ENCODE measurements at regions of chr3 and their contacts with region 1.

Region 1: GRCh38 chr3:188154014-188154808 is at the start of gene LPP:
- DNase-seq: peak; percentile 91
- ATAC-seq: peak; percentile 84
- H3K4me3 Mint-ChIP-seq: peak within 1 kb of the TSS; percentile 92
- H3K27ac Mint-ChIP-seq: peak within 1 kb of the TSS; percentile 94
- H3K4me1 Mint-ChIP-seq: peaks cover 54% of the 10 kb centered on the region
- H3K27me3 Mint-ChIP-seq: no peaks in the 10 kb centered on the region
- total RNA-seq, gene LPP: 49.6 to 54.3 TPM

Region 2: GRCh38 chr3:187802928-187803259 is 351.3 kb before region 1 on chr3:
- POLR2A ChIA-PET with region 1: interaction called, 24 read pairs
- DNase-seq: no peak
- ATAC-seq: peak; percentile 50
- H3K4me3 Mint-ChIP-seq: peak overlapping the region; percentile 73
- H3K27ac Mint-ChIP-seq: peak overlapping the region; percentile 95
- H3K4me1 Mint-ChIP-seq: peaks cover 75% of the 10 kb centered on the region
- H3K27me3 Mint-ChIP-seq: no peaks in the 10 kb centered on the region

Region 3: DNA sequence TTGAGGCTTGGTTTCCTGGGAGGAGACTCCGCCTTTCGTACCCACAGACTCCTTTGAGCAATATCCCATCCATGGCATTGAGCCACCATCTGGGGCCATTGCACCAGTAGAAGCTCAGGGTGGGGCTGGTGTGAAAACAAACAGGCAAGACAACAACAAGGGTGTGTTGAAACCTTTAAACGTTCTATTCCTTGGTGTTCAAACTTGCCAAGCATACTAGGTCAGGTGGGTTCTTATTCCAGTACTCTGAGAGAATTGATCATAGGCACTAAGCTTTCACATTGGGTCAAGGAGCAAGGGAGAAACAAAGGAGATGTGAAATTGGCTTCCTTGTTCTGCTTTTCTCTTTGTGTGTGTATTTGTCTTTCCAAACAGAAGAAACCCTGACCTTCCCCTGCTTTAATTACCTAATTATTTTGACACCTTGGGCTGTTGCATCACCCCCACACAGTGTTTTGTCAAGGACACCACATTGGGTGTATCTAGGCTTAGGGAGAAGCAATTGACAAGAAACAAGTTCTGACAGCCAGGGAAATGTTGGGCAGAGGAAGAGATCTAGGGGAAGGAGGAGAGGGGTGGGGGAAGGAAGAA is 303.8 kb before region 1 on chr3:
- POLR2A ChIA-PET with region 1: no interaction called
- DNase-seq: no peak
- ATAC-seq: no peak
- H3K4me3 Mint-ChIP-seq: no peak overlapping the region
- H3K27ac Mint-ChIP-seq: no peak overlapping the region
- H3K4me1 Mint-ChIP-seq: peaks cover 5% of the 10 kb centered on the region
- H3K27me3 Mint-ChIP-seq: no peaks in the 10 kb centered on the region

Region 4: GRCh38 chr3:188000361-188000861 is 153.8 kb before region 1 on chr3:
- POLR2A ChIA-PET with region 1: interaction called, 27 read pairs
- DNase-seq: peak; percentile 59
- ATAC-seq: peak; percentile 53
- H3K4me3 Mint-ChIP-seq: peak overlapping the region; percentile 77
- H3K27ac Mint-ChIP-seq: peak overlapping the region; percentile 94
- H3K4me1 Mint-ChIP-seq: peaks cover 64% of the 10 kb centered on the region
- H3K27me3 Mint-ChIP-seq: no peaks in the 10 kb centered on the region

Region 5: DNA sequence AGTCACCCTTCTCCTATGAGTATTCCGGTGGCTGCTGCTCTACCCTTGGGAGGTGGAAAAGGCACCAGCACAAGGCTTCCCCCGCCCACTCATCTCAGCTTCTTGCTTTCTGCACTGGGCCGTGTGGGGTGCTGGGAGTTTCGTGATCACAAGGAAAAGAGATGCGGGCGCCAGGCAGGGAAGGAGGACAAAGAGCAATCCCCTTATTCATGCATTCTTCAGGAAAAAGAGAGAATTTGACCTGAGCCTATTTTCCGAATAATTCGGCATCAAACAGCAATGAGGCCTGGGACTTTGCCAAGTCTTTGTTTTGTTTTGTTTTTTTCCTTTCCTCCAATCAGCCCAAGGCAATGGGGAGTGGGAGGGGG is 102.4 kb before region 1 on chr3:
- POLR2A ChIA-PET with region 1: interaction called, 11 read pairs
- DNase-seq: no peak
- ATAC-seq: no peak
- H3K4me3 Mint-ChIP-seq: no peak overlapping the region
- H3K27ac Mint-ChIP-seq: no peak overlapping the region
- H3K4me1 Mint-ChIP-seq: peaks cover 26% of the 10 kb centered on the region
- H3K27me3 Mint-ChIP-seq: no peaks in the 10 kb centered on the region